ENCODE measurements at regions of chr6 and their contacts with region 1.

Region 1: GRCh38 chr6:160455541-160456213 is 107.5 kb downstream of the SLC22A3 start:
- DNase-seq: peak; percentile 61
- H3K4me3 ChIP-seq: no peak overlapping the region
- H3K27ac ChIP-seq: peak overlapping the region; percentile 52 to 63
- H3K4me1 ChIP-seq: no peaks in the 10 kb centered on the region
- H3K27me3 ChIP-seq: no peaks in the 10 kb centered on the region
- CTCF ChIP-seq: peak; percentile 90 to 98 (median 97)
- POLR2A ChIP-seq: no peak

Region 2: GRCh38 chr6:159862103-159862502 is 593.6 kb before region 1 on chr6:
- intact Hi-C with region 1: loop called (anchors 5 kb)
- DNase-seq: no peak
- H3K4me3 ChIP-seq: no peak overlapping the region
- H3K27ac ChIP-seq: no peak overlapping the region
- H3K4me1 ChIP-seq: no peaks in the 10 kb centered on the region
- H3K27me3 ChIP-seq: no peaks in the 10 kb centered on the region
- CTCF ChIP-seq: no peak
- POLR2A ChIP-seq: no peak

Region 3: GRCh38 chr6:160088069-160088783 is 367.5 kb before region 1 on chr6:
- intact Hi-C with region 1: loop called (anchors 5 kb)
- DNase-seq: peak; percentile 65
- H3K4me3 ChIP-seq: no peak overlapping the region
- H3K27ac ChIP-seq: peak overlapping the region in 1 of 2 donors; percentile 4
- H3K4me1 ChIP-seq: no peaks in the 10 kb centered on the region
- H3K27me3 ChIP-seq: no peaks in the 10 kb centered on the region
- CTCF ChIP-seq: peak; percentile 50 to 76 (median 64)
- POLR2A ChIP-seq: no peak

Region 4: DNA sequence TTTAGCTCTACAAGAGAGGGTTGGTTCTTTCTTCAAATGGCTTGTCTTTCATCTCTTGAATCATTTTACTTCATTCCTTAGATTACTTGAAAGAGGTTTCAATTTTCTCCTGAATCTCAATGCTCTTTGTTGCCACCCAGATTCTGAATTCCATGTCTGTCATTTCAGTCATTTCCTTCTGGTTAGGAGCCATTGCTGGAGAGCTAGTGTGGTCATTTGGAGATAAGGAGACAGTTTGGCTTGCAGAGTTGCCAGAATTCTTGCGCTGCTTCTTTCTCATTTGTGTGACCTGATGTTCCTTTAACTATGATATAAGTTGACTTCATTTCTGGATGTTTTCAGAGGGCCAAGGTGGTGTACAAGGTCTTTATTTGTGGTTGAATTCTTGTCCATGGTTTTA is 50.3 kb after region 1 on chr6:
- intact Hi-C with region 1: no loop called
- DNase-seq: no peak
- H3K4me3 ChIP-seq: no peak overlapping the region
- H3K27ac ChIP-seq: no peak overlapping the region
- H3K4me1 ChIP-seq: no peaks in the 10 kb centered on the region
- H3K27me3 ChIP-seq: no peaks in the 10 kb centered on the region
- CTCF ChIP-seq: no peak
- POLR2A ChIP-seq: no peak

Region 5: GRCh38 chr6:160535271-160535670 is 79.6 kb after region 1 on chr6:
- intact Hi-C with region 1: loop called (anchors 1 kb)
- DNase-seq: no peak
- H3K4me3 ChIP-seq: no peak overlapping the region
- H3K27ac ChIP-seq: no peak overlapping the region
- H3K4me1 ChIP-seq: no peaks in the 10 kb centered on the region
- H3K27me3 ChIP-seq: no peaks in the 10 kb centered on the region
- CTCF ChIP-seq: no peak
- POLR2A ChIP-seq: no peak

Region 6: GRCh38 chr6:161161889-161162624 is 706.4 kb after region 1 on chr6:
- intact Hi-C with region 1: no loop called
- DNase-seq: peak; percentile 40
- H3K4me3 ChIP-seq: no peak overlapping the region
- H3K27ac ChIP-seq: no peak overlapping the region
- H3K4me1 ChIP-seq: peaks cover 3% of the 10 kb centered on the region
- H3K27me3 ChIP-seq: no peaks in the 10 kb centered on the region
- CTCF ChIP-seq: no peak
- POLR2A ChIP-seq: no peak

Measured in prostate gland (tissue), 2 donors.